Posterior cingulate gyrus (tissue), 11 donors: ENCODE measurements at regions of chr4 and their contacts with region 1.

Region 1: GRCh38 chr4:73258686-73259570 is at the start of gene ANKRD17:
- DNase-seq: peak; percentile 83 to 98 (median 88)

Region 2: DNA sequence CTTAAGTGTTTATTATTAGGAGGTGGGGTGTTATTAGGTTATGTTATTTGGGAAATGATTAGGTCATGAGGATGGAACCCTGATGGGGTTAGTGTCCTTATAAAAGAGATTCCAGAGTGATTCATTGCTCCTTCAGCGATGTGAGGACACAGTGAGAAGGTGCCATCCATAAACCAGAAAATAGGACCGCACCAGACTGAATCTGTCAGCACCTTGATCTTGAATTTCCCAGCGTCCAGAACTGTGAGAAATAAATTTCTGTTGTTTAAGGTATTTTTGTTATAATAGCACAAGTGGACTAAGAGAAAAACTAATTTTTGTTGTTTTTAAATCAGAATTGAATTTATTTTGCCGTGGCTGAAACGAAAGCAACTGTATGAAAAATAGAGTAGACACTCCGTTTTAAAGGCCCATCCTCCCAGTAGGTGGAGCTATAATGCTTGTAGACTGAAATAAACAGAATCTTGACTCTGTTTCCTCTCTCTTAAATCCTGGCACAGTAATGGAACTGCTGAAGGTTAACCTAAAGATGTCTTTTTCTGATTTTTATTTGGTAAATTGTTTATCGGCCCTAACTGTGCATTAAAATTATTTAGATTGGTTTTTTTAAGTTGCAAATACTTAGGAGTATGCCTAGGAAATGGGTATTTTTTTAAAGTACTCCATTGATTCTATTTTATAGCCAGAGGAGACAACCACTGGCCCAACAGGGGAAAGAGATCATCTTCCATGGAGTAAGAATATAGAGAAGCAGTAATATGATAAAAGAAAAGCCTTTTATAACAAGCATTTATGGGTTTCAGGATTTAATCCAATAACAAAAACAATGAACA is 556.7 kb before region 1 on chr4:
- intact Hi-C with region 1: loop called (anchors 2 kb)
- DNase-seq: peak in 1 of 10 donors; percentile 11

Region 3: GRCh38 chr4:73069338-73070073 is 189.4 kb before region 1 on chr4 and contains the start of gene COX18:
- intact Hi-C with region 1: loop called (anchors 1 kb)
- DNase-seq: peak; percentile 95 to 100 (median 96)

Region 4: GRCh38 chr4:73127839-73128453 is 131.0 kb before region 1 on chr4:
- intact Hi-C with region 1: loop called (anchors 5 kb)
- DNase-seq: peak in 2 of 10 donors; percentile 21 to 80

Region 5: DNA sequence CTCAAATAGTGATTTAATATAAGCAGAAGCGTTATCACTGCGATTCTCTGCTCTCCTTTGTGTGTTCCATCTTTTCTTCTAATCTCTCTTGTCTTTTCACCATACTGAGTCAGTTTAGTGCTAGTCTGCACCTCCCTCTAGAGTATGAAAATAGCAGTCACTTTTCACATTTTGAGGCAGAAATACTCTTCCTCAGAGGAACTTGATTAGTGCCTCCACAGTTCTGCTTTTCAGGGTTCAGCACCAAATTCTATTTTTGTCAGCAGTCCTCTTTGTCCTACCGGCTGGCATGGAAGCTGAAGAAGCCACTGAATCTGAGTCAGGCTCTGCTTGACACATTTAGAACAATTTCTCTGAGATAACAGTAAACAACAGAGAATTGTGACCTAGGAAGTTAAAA is 49.4 kb after region 1 on chr4:
- intact Hi-C with region 1: loop called (anchors 5 kb)
- DNase-seq: peak in 2 of 10 donors; percentile 14 to 75

Region 6: DNA sequence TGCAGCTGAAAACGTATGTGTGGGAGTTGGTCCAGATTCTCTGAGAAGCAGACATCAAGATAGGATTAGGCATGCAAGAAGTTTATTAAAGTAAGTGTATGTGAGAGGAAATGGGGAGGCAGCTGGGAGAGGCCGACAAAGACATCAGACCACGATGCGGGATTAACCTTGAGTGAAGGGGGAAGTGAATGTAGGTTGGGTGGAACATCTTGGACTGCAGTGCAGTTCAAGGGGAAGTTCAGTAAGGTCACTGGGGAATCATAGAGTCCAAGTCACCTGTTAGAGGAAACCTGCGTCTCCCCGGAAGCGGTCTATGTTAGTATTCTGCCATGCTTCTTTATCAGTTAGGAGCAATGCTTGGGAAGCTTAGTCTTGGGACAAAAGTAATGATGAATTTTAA is 503.5 kb after region 1 on chr4:
- intact Hi-C with region 1: no loop called
- DNase-seq: no peak